ENCODE measurements at regions of chr16 and their contacts with region 1.

Region 1: GRCh38 chr16:68873635-68874471 is 30.5 kb downstream of the TANGO6 start:
- DNase-seq: no peak
- H3K4me3 ChIP-seq: no peak overlapping the region
- H3K27ac ChIP-seq: no peak overlapping the region
- H3K4me1 ChIP-seq: no peaks in the 10 kb centered on the region
- H3K27me3 ChIP-seq: no peaks in the 10 kb centered on the region
- CTCF ChIP-seq: no peak
- POLR2A ChIP-seq: no peak

Region 2: GRCh38 chr16:68696514-68696913 is 177.3 kb before region 1 on chr16:
- intact Hi-C with region 1: no loop called
- DNase-seq: no peak
- H3K4me3 ChIP-seq: no peak overlapping the region
- H3K27ac ChIP-seq: no peak overlapping the region
- H3K4me1 ChIP-seq: peaks cover 0 to 27% (median 9%) of the 10 kb centered on the region in 6 donors
- H3K27me3 ChIP-seq: no peaks in the 10 kb centered on the region
- CTCF ChIP-seq: no peak
- POLR2A ChIP-seq: no peak

Region 3: GRCh38 chr16:68948230-68948910 is 74.5 kb after region 1 on chr16:
- intact Hi-C with region 1: loop called (anchors 10 kb)
- DNase-seq: no peak
- H3K4me3 ChIP-seq: no peak overlapping the region
- H3K27ac ChIP-seq: no peak overlapping the region
- H3K4me1 ChIP-seq: no peaks in the 10 kb centered on the region
- H3K27me3 ChIP-seq: no peaks in the 10 kb centered on the region
- CTCF ChIP-seq: no peak
- POLR2A ChIP-seq: no peak

Region 4: GRCh38 chr16:69003500-69003899 is 129.6 kb after region 1 on chr16:
- intact Hi-C with region 1: no loop called
- DNase-seq: no peak
- H3K4me3 ChIP-seq: no peak overlapping the region
- H3K27ac ChIP-seq: no peak overlapping the region
- H3K4me1 ChIP-seq: no peaks in the 10 kb centered on the region
- H3K27me3 ChIP-seq: no peaks in the 10 kb centered on the region
- CTCF ChIP-seq: no peak
- POLR2A ChIP-seq: no peak